ENCODE measurements at regions of chr5 and their contacts with region 1.

Region 1: GRCh38 chr5:76074487-76075065 is 8.6 kb upstream of the SV2C start:
- DNase-seq: peak in 4 of 9 donors; percentile 8 to 13 (median 10)
- ATAC-seq: peak; percentile 61
- H3K4me3 ChIP-seq: no peak overlapping the region
- H3K4me3 Mint-ChIP-seq: no peak overlapping the region
- H3K27ac ChIP-seq: no peak overlapping the region
- H3K27ac Mint-ChIP-seq: no peak overlapping the region
- H3K4me1 ChIP-seq: no peaks in the 10 kb centered on the region
- H3K4me1 Mint-ChIP-seq: no peaks in the 10 kb centered on the region
- H3K27me3 ChIP-seq: no peaks in the 10 kb centered on the region
- H3K27me3 Mint-ChIP-seq: peaks cover 51 to 73% (median 63%) of the 10 kb centered on the region in 5 donors

Region 2: GRCh38 chr5:76104027-76104426 is 29.5 kb after region 1 on chr5:
- CTCF ChIA-PET with region 1: no interaction called
- POLR2A ChIA-PET with region 1: no interaction called
- intact Hi-C with region 1: no loop called
- DNase-seq: peak in 1 of 9 donors; percentile 30
- ATAC-seq: no peak
- H3K4me3 ChIP-seq: no peak overlapping the region
- H3K4me3 Mint-ChIP-seq: no peak overlapping the region
- H3K27ac ChIP-seq: no peak overlapping the region
- H3K27ac Mint-ChIP-seq: no peak overlapping the region
- H3K4me1 ChIP-seq: no peaks in the 10 kb centered on the region
- H3K4me1 Mint-ChIP-seq: peaks cover 7 to 9% (median 8%) of the 10 kb centered on the region in 7 donors
- H3K27me3 ChIP-seq: no peaks in the 10 kb centered on the region
- H3K27me3 Mint-ChIP-seq: peaks cover 19 to 45% (median 28%) of the 10 kb centered on the region in 5 donors

Region 3: GRCh38 chr5:76175051-76175666 is 100.6 kb after region 1 on chr5:
- CTCF ChIA-PET with region 1: interaction called, 4 read pairs
- POLR2A ChIA-PET with region 1: no interaction called
- intact Hi-C with region 1: loop called in 1 of 2 experiments (anchors 2 kb)
- DNase-seq: peak in 7 of 9 donors; percentile 12 to 34 (median 26)
- ATAC-seq: peak; percentile 75
- H3K4me3 ChIP-seq: no peak overlapping the region
- H3K4me3 Mint-ChIP-seq: peak overlapping the region in 7 of 10 donors; percentile 30 to 70 (median 52)
- H3K27ac ChIP-seq: no peak overlapping the region
- H3K27ac Mint-ChIP-seq: no peak overlapping the region
- H3K4me1 ChIP-seq: peaks cover 4 to 16% of the 10 kb centered on the region in 2 donors
- H3K4me1 Mint-ChIP-seq: peaks cover 15 to 20% (median 17%) of the 10 kb centered on the region in 7 donors
- H3K27me3 ChIP-seq: no peaks in the 10 kb centered on the region
- H3K27me3 Mint-ChIP-seq: peaks cover 0 to 6% (median 0%) of the 10 kb centered on the region in 5 donors

Region 4: GRCh38 chr5:76582230-76583162 is 507.9 kb after region 1 on chr5:
- CTCF ChIA-PET with region 1: no interaction called
- POLR2A ChIA-PET with region 1: no interaction called
- intact Hi-C with region 1: loop called in 1 of 2 experiments (anchors 2 kb)
- DNase-seq: no peak
- ATAC-seq: peak; percentile 76
- H3K4me3 ChIP-seq: no peak overlapping the region
- H3K4me3 Mint-ChIP-seq: no peak overlapping the region
- H3K27ac ChIP-seq: no peak overlapping the region
- H3K27ac Mint-ChIP-seq: peak overlapping the region in 4 of 9 donors; percentile 18 to 76 (median 47)
- H3K4me1 ChIP-seq: no peaks in the 10 kb centered on the region
- H3K4me1 Mint-ChIP-seq: peaks cover 0 to 31% (median 13%) of the 10 kb centered on the region in 7 donors
- H3K27me3 ChIP-seq: no peaks in the 10 kb centered on the region
- H3K27me3 Mint-ChIP-seq: no peaks in the 10 kb centered on the region

Region 5: GRCh38 chr5:76641514-76642120 is 567.0 kb after region 1 on chr5:
- CTCF ChIA-PET with region 1: no interaction called
- POLR2A ChIA-PET with region 1: no interaction called
- intact Hi-C with region 1: loop called in 1 of 2 experiments (anchors 1 kb)
- DNase-seq: peak; percentile 13 to 71 (median 55)
- ATAC-seq: peak; percentile 78
- H3K4me3 ChIP-seq: no peak overlapping the region
- H3K4me3 Mint-ChIP-seq: no peak overlapping the region
- H3K27ac ChIP-seq: no peak overlapping the region
- H3K27ac Mint-ChIP-seq: no peak overlapping the region
- H3K4me1 ChIP-seq: no peaks in the 10 kb centered on the region
- H3K4me1 Mint-ChIP-seq: peaks cover 0 to 13% (median 0%) of the 10 kb centered on the region in 7 donors
- H3K27me3 ChIP-seq: no peaks in the 10 kb centered on the region
- H3K27me3 Mint-ChIP-seq: no peaks in the 10 kb centered on the region